Activated CD8-positive, alpha-beta T cell treated with anti-CD3 and anti-CD28 coated beads, Interleukin-2, amount 10 ng/mL, durations not matched to agents 7 days and 5 days (primary cell): ENCODE measurements at regions of chr11 and their contacts with region 1.

Region 1: DNA sequence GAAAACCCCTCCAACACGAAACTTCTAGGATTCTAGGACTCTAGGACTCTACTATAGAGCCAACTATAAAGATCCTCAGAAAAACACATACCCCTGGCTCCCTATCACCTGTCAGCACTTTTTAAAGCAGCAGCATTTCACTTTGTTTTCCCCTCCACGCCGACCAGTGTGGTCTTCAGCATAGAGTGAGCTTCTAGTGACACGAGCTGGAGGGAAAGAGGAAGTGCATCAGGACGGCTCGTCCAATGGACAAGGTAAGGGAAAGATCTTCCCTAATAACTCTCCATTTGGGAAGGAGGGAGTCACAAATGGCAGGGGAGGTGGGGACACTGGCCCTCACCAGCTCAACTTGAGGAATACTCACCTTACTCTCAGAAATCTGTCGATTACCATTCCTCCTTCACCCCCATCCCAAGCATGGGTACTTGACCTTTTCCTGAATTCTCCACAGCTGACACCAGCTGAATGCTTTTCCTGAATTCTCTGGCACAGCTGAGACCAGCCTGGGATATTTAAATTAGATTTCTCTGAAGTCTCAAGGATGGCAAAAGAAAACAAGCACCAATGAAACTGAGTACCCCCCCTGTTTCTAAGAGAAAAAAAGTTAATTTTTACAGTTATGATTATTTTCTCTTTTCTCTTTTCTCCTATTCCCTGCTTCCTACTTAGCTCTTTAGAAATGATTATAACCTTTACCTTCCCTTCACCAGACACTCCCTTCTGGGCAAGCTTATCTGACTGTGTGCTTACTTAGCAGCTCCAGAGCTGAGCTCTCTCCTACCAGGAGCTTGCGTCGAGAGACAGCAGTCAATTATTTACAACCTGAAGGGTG is 33.3 kb upstream of the NNMT start:
- DNase-seq: peak; percentile 55
- ATAC-seq: peak; percentile 63
- H3K4me3 Mint-ChIP-seq: no peak overlapping the region
- H3K27ac Mint-ChIP-seq: no peak overlapping the region
- H3K4me1 Mint-ChIP-seq: peaks cover 24% of the 10 kb centered on the region
- H3K27me3 Mint-ChIP-seq: peaks cover 2% of the 10 kb centered on the region

Region 2: GRCh38 chr11:113906038-113906437 is 356.9 kb before region 1 on chr11:
- CTCF ChIA-PET with region 1: interaction called, 17 read pairs
- POLR2A ChIA-PET with region 1: no interaction called
- DNase-seq: no peak
- ATAC-seq: no peak
- H3K4me3 Mint-ChIP-seq: no peak overlapping the region
- H3K27ac Mint-ChIP-seq: no peak overlapping the region
- H3K4me1 Mint-ChIP-seq: no peaks in the 10 kb centered on the region
- H3K27me3 Mint-ChIP-seq: peaks cover 26% of the 10 kb centered on the region

Region 3: GRCh38 chr11:114036156-114036811 is 226.6 kb before region 1 on chr11:
- CTCF ChIA-PET with region 1: interaction called, 88 read pairs
- POLR2A ChIA-PET with region 1: interaction called, 3 read pairs
- DNase-seq: peak; percentile 67
- ATAC-seq: peak; percentile 92
- H3K4me3 Mint-ChIP-seq: no peak overlapping the region
- H3K27ac Mint-ChIP-seq: no peak overlapping the region
- H3K4me1 Mint-ChIP-seq: peaks cover 7% of the 10 kb centered on the region
- H3K27me3 Mint-ChIP-seq: peaks cover 9% of the 10 kb centered on the region

Region 4: GRCh38 chr11:114073828-114074381 is 189.0 kb before region 1 on chr11:
- CTCF ChIA-PET with region 1: interaction called, 12 read pairs
- POLR2A ChIA-PET with region 1: no interaction called
- DNase-seq: peak; percentile 63
- ATAC-seq: peak; percentile 62
- H3K4me3 Mint-ChIP-seq: peak overlapping the region; percentile 38
- H3K27ac Mint-ChIP-seq: peak overlapping the region; percentile 91
- H3K4me1 Mint-ChIP-seq: peaks cover 71% of the 10 kb centered on the region
- H3K27me3 Mint-ChIP-seq: peaks cover 5% of the 10 kb centered on the region

Region 5: GRCh38 chr11:114166897-114167323 is 96.0 kb before region 1 on chr11:
- CTCF ChIA-PET with region 1: interaction called, 13 read pairs
- POLR2A ChIA-PET with region 1: no interaction called
- DNase-seq: peak; percentile 48
- ATAC-seq: peak; percentile 62
- H3K4me3 Mint-ChIP-seq: peak overlapping the region; percentile 33
- H3K27ac Mint-ChIP-seq: peak overlapping the region; percentile 77
- H3K4me1 Mint-ChIP-seq: peaks cover 93% of the 10 kb centered on the region
- H3K27me3 Mint-ChIP-seq: no peaks in the 10 kb centered on the region

Region 6: GRCh38 chr11:114250993-114251814 is 11.7 kb before region 1 on chr11:
- CTCF ChIA-PET with region 1: interaction called, 22 read pairs
- POLR2A ChIA-PET with region 1: no interaction called
- DNase-seq: no peak
- ATAC-seq: no peak
- H3K4me3 Mint-ChIP-seq: no peak overlapping the region
- H3K27ac Mint-ChIP-seq: no peak overlapping the region
- H3K4me1 Mint-ChIP-seq: peaks cover 4% of the 10 kb centered on the region
- H3K27me3 Mint-ChIP-seq: no peaks in the 10 kb centered on the region

Region 7: GRCh38 chr11:114317787-114318137 is 54.9 kb after region 1 on chr11:
- CTCF ChIA-PET with region 1: no interaction called
- POLR2A ChIA-PET with region 1: no interaction called
- DNase-seq: no peak
- ATAC-seq: no peak
- H3K4me3 Mint-ChIP-seq: no peak overlapping the region
- H3K27ac Mint-ChIP-seq: no peak overlapping the region
- H3K4me1 Mint-ChIP-seq: peaks cover 23% of the 10 kb centered on the region
- H3K27me3 Mint-ChIP-seq: no peaks in the 10 kb centered on the region

Region 8: DNA sequence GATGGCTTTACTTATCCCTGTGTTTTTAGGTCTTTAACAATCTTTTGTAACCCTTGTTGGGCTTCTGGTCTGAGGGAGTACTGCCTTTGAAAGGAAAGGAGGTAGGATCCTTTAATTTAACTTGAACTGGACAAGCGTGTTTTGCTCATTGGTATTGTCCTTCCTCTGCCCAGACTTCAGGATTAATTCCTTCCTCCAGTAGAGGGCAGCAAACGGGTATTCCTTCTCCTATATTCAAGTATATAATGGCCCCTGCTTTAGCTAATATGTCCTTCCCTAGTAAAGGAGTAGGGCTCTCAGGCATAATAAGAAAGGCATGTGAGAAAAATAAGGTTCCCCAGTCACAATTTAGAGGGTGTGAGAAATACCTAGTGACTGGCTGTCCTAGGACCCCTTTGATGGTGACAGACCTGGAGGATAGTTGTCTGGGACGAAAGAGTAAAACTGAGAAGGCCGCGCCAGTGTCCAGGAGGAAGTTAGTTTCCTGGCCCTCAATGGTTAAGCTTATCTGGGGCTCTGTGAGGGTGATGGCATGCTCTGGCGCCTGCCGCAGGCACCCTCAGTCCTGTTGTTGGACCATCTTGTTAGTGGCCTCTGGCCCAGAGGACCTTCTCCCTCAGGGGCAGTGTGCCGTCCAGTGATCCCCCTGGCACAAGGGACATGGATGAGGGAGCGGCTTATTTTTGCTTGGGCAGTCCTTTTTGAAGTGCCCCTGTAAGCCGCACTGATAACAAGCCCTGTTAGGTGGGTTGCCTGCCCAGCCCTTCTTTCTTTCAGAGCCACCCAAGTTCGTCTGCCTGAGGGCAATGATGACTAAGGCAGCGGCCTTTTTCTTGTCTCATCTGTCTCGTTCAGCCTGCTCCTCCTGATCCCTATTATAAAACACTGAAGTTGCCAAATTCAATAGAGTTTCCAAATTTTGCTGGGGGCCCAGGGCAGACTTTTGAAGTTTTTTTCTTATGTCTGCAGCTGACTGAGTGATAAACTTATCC is 85.6 kb after region 1 on chr11:
- CTCF ChIA-PET with region 1: no interaction called
- POLR2A ChIA-PET with region 1: no interaction called
- DNase-seq: peak; percentile 55
- ATAC-seq: peak; percentile 53
- H3K4me3 Mint-ChIP-seq: no peak overlapping the region
- H3K27ac Mint-ChIP-seq: no peak overlapping the region
- H3K4me1 Mint-ChIP-seq: peaks cover 7% of the 10 kb centered on the region
- H3K27me3 Mint-ChIP-seq: no peaks in the 10 kb centered on the region